Calu3 (cell line): ENCODE measurements at regions of chr18 and their contacts with region 1.

Region 1: GRCh38 chr18:73980289-73980979 is 167.2 kb downstream of the FBXO15 start:
- DNase-seq: peak; percentile 67
- H3K4me3 Mint-ChIP-seq: no peak overlapping the region
- H3K27ac Mint-ChIP-seq: peak overlapping the region; percentile 9
- H3K4me1 Mint-ChIP-seq: peaks cover 16% of the 10 kb centered on the region
- H3K27me3 Mint-ChIP-seq: no peaks in the 10 kb centered on the region
- CTCF ChIP-seq: peak; percentile 86

Region 2: DNA sequence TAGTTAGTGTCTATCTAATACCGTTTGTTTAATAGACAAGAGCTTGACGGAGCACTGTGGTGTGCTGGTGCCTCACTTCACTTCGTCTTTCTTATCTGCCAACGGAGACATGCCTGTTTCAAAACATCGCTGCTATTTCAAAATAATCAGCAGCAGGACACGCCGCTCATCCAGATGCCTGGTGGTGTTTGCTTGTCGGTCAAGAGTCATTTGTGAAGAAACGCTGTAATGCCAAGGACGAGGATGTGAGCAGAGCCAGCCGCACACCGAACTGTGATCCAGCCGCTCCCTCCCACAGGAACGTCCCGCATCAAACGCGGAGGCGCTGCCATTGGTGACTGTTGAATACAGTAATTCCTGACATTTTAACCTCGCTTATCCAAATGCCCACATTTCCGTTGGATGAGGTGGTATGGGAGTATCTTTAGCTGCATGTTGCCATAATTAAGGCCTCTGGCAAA is 265.2 kb before region 1 on chr18:
- CTCF ChIA-PET with region 1: no interaction called
- intact Hi-C with region 1: no loop called
- DNase-seq: no peak
- H3K4me3 Mint-ChIP-seq: no peak overlapping the region
- H3K27ac Mint-ChIP-seq: no peak overlapping the region
- H3K4me1 Mint-ChIP-seq: peaks cover 21% of the 10 kb centered on the region
- H3K27me3 Mint-ChIP-seq: no peaks in the 10 kb centered on the region
- CTCF ChIP-seq: no peak

Region 3: GRCh38 chr18:73848656-73849055 is 131.8 kb before region 1 on chr18:
- CTCF ChIA-PET with region 1: no interaction called
- intact Hi-C with region 1: loop called (anchors 5 kb)
- DNase-seq: no peak
- H3K4me3 Mint-ChIP-seq: no peak overlapping the region
- H3K27ac Mint-ChIP-seq: peak overlapping the region; percentile 27
- H3K4me1 Mint-ChIP-seq: peaks cover 33% of the 10 kb centered on the region
- H3K27me3 Mint-ChIP-seq: no peaks in the 10 kb centered on the region
- CTCF ChIP-seq: no peak

Region 4: GRCh38 chr18:73891572-73892421 is 88.6 kb before region 1 on chr18:
- CTCF ChIA-PET with region 1: no interaction called
- intact Hi-C with region 1: loop called (anchors 10 kb)
- DNase-seq: no peak
- H3K4me3 Mint-ChIP-seq: no peak overlapping the region
- H3K27ac Mint-ChIP-seq: no peak overlapping the region
- H3K4me1 Mint-ChIP-seq: peaks cover 46% of the 10 kb centered on the region
- H3K27me3 Mint-ChIP-seq: no peaks in the 10 kb centered on the region
- CTCF ChIP-seq: no peak

Region 5: DNA sequence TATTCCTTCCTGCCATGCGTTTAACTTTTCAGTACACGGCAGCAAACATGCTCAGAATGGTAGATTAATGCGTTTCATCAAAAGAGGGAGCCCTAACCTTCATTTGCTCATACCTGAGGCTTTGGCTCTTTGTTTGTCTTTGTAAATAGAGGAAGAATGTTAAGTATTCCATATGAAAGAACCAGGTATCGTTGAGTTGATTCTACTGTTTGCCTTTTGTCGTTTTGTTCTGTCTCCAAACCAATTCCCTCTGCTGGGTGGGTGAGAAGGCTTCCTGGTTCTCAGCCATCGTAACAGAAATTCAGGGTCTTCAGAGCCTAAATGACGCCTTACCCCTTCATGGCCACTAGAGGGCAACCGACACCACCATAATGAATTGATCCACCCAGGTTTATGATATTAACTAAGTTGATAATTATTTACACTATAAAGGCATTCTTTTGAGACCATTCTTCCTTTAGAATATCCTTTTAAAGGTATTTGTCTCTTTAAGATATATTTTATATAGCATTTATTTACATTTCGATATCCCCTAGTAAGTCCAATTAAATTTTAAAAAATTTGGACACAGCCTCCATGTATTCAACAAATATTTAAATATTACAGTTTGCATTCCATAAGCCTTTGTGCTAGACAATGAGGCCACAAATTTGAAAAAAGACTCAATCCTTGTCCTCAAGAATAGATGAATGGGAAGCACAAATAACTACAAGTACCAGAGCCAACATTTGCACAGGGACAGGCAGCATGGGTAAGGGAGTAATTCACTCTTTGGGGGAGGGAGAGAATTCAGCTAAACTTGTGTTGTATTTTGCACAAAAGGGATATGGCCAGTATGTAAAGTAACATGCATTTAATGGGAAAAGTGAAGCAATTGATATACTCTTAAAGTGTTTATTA is 216.0 kb after region 1 on chr18:
- CTCF ChIA-PET with region 1: no interaction called
- intact Hi-C with region 1: no loop called
- DNase-seq: peak; percentile 49
- H3K4me3 Mint-ChIP-seq: peak overlapping the region; percentile 66
- H3K27ac Mint-ChIP-seq: peak overlapping the region; percentile 67
- H3K4me1 Mint-ChIP-seq: peaks cover 24% of the 10 kb centered on the region
- H3K27me3 Mint-ChIP-seq: peaks cover 16% of the 10 kb centered on the region
- CTCF ChIP-seq: peak; percentile 88